Natural killer cell (primary cell): ENCODE measurements at regions of chr14 and their contacts with region 1.

Region 1: DNA sequence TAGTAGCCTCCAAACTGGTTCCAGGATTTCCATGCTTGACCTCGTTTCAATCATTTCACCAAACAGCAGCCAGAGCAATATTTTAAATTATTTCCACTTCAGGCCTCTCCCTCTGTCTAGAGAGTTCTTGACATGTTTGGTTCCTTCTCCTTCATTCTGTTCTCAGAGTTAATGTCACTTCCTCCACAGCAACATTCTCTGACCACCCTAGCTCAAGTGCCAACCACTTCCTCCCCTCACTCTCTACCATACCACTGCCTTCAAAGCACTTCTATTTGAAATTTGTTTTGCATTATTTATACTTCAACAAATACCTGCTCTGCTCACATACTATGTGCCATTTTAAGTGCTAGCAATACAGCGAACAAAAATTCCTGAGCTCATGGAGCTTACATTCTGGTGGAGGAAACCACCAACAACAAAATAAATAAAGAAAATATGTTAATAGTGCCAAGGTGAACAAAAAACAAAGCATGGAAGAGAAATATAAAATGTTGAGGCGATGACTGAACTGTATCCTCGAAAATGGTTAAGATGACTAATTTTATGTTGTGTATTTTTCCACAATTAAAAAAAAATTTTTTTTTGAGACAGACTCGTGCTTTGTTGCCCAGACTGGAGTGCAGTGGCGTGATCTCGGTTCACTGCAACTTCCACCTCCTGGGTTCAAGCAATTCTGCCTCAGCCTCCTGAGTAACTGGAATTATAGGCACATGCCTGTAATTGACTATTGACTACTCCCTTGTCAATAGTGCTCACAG is 17.3 kb downstream of the BAZ1A start:
- DNase-seq: peak; percentile 27 to 64
- ATAC-seq: peak; percentile 69 to 88 (median 78)
- H3K4me3 ChIP-seq: no peak overlapping the region
- H3K4me3 Mint-ChIP-seq: peak overlapping the region; percentile 87
- H3K27ac ChIP-seq: peak overlapping the region; percentile 80
- H3K27ac Mint-ChIP-seq: peak overlapping the region; percentile 86 to 94
- H3K4me1 ChIP-seq: peaks cover 30% of the 10 kb centered on the region
- H3K4me1 Mint-ChIP-seq: peaks cover 44 to 49% of the 10 kb centered on the region in 2 donors
- H3K27me3 ChIP-seq: no peaks in the 10 kb centered on the region
- H3K27me3 Mint-ChIP-seq: no peaks in the 10 kb centered on the region
- CTCF ChIP-seq: no peak

Region 2: GRCh38 chr14:34810028-34810427 is 47.8 kb before region 1 on chr14:
- intact Hi-C with region 1: no loop called
- DNase-seq: no peak
- ATAC-seq: peak in 1 of 3 donors; percentile 34
- H3K4me3 ChIP-seq: no peak overlapping the region
- H3K4me3 Mint-ChIP-seq: no peak overlapping the region
- H3K27ac ChIP-seq: no peak overlapping the region
- H3K27ac Mint-ChIP-seq: peak overlapping the region; percentile 15 to 34
- H3K4me1 ChIP-seq: no peaks in the 10 kb centered on the region
- H3K4me1 Mint-ChIP-seq: peaks cover 14 to 16% of the 10 kb centered on the region in 2 donors
- H3K27me3 ChIP-seq: no peaks in the 10 kb centered on the region
- H3K27me3 Mint-ChIP-seq: no peaks in the 10 kb centered on the region
- CTCF ChIP-seq: no peak

Region 3: DNA sequence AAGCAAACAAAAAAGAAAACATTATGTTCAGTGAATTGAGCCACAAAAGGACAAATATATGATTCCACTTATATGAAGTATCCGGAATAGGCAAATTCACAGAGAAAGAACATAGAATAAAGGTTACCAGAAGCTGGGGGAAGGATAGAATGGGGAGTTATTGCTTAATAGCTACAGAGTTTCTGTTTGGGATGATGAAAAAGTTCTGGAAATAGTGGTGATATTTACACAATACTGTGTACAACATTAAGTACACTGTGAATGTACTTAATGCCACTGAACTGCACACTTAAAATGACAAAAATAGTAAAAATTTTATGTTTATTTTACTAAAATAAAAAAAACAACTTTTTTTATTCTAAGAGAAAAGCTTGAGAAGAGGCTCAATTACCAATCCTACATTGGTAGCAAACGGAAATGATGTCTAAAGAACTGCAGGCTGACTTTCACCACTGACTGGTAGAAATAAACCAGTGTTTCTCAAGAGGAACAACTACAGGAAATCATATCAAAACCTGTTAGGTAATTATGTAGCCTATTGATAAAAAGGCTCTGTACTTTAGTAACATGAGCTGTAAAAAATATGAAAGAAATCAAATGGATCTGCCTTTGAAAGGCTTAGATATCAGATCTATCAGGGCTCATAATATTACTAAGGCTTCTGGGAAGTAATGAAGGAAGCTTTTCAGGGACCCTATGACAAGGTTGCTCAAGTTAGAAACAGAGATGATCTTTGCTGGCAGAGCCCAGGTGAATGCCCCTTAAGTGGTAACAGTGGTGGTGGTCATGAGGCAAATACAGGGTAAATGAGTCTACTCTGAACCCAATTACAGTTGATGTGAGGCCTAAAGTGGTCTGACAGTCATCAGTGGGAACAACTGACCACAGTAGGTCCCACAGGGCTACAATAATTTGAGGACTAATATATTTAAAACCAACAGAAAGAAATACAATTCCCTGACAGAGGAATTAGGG is 24.0 kb before region 1 on chr14:
- intact Hi-C with region 1: loop called (anchors 2 kb)
- DNase-seq: peak in 1 of 2 donors; percentile 47
- ATAC-seq: peak; percentile 82 to 87 (median 86)
- H3K4me3 ChIP-seq: no peak overlapping the region
- H3K4me3 Mint-ChIP-seq: peak overlapping the region; percentile 67
- H3K27ac ChIP-seq: peak overlapping the region; percentile 80
- H3K27ac Mint-ChIP-seq: peak overlapping the region; percentile 95 to 98
- H3K4me1 ChIP-seq: peaks cover 14% of the 10 kb centered on the region
- H3K4me1 Mint-ChIP-seq: peaks cover 47 to 50% of the 10 kb centered on the region in 2 donors
- H3K27me3 ChIP-seq: no peaks in the 10 kb centered on the region
- H3K27me3 Mint-ChIP-seq: no peaks in the 10 kb centered on the region
- CTCF ChIP-seq: no peak